ENCODE measurements at regions of chrX and their contacts with region 1.

Region 1: DNA sequence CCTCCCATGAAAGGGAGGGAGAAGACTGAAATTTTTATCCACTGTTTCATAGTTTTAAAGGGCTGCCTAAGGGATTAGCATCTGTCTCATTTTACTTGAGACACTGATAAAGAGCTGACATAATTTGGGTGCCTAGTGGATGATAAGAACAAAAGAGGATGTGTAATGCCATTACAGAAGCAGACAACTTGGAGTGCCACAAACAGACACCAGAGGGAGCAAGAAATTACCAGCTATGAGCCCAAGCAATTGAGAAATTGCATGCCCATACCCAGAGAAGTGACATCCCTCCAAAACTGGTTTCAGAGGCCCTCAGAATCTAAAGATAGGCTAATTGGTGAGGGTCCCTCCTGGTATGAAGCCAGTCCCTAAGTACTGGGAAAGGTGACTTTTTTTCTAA is 38.5 kb upstream of the POU3F4 start:
- DNase-seq: no peak
- ATAC-seq: no peak
- H3K4me3 ChIP-seq: no peak overlapping the region
- H3K27ac ChIP-seq: no peak overlapping the region
- H3K4me1 ChIP-seq: no peaks in the 10 kb centered on the region
- H3K27me3 ChIP-seq: no peaks in the 10 kb centered on the region
- CTCF ChIP-seq: peak in 7 of 12 donors; percentile 8 to 35 (median 20)
- POLR2A ChIP-seq: no peak

Region 2: GRCh38 chrX:82070941-82071340 is 1398.6 kb before region 1 on chrX:
- intact Hi-C with region 1: loop called in 1 of 10 experiments (anchors 10 kb)
- DNase-seq: no peak
- ATAC-seq: no peak
- H3K4me3 ChIP-seq: no peak overlapping the region
- H3K27ac ChIP-seq: no peak overlapping the region
- H3K4me1 ChIP-seq: no peaks in the 10 kb centered on the region
- H3K27me3 ChIP-seq: no peaks in the 10 kb centered on the region
- CTCF ChIP-seq: no peak
- POLR2A ChIP-seq: no peak

Region 3: DNA sequence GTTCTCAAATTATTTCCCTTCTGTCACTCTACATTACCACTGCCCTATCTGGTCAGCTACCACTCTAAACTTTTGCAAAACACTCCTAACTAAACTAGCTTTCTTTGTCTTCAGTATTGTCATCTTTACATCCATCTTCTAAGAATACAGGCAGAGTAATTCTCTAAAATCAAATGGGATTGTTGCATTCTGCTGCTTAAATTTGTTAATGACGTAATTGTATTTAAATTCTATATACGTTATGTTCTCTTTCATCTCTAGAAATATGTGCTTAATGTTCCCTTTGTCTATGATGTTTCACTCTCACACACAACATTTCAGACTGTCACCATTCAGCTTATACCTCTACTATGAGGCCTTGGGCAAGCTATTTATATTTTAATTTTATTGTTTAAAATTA is 1002.6 kb before region 1 on chrX:
- intact Hi-C with region 1: no loop called
- DNase-seq: no peak
- ATAC-seq: no peak
- H3K4me3 ChIP-seq: no peak overlapping the region
- H3K27ac ChIP-seq: no peak overlapping the region
- H3K4me1 ChIP-seq: no peaks in the 10 kb centered on the region
- H3K27me3 ChIP-seq: no peaks in the 10 kb centered on the region
- CTCF ChIP-seq: no peak
- POLR2A ChIP-seq: no peak

Region 4: GRCh38 chrX:83416273-83416672 is 53.3 kb before region 1 on chrX:
- intact Hi-C with region 1: no loop called
- DNase-seq: no peak
- ATAC-seq: no peak
- H3K4me3 ChIP-seq: no peak overlapping the region
- H3K27ac ChIP-seq: no peak overlapping the region
- H3K4me1 ChIP-seq: no peaks in the 10 kb centered on the region
- H3K27me3 ChIP-seq: no peaks in the 10 kb centered on the region
- CTCF ChIP-seq: peak in 2 of 12 donors; percentile 6 to 14
- POLR2A ChIP-seq: no peak

Region 5: DNA sequence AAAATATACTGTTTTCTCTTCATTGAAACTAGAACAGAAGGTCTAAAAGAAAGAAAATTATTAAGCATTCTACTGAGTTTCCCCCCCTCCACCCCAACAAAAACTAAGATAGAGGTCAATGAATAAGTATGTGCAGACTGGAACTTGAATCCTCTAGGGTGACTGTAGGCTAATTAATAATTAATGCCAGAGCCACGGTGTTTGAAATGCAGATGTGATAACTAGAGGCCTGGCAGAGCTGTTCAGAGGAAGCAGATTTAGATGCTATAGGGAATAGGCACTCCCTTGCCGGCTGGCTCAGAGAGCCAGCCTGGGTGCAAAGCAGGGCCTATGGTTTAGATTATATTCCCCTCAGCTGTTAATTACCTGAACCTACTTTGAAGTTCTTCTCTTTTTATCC is 26.3 kb after region 1 on chrX:
- intact Hi-C with region 1: no loop called
- DNase-seq: no peak
- ATAC-seq: no peak
- H3K4me3 ChIP-seq: no peak overlapping the region
- H3K27ac ChIP-seq: no peak overlapping the region
- H3K4me1 ChIP-seq: no peaks in the 10 kb centered on the region
- H3K27me3 ChIP-seq: peaks cover 0 to 7% (median 0%) of the 10 kb centered on the region in 9 donors
- CTCF ChIP-seq: no peak
- POLR2A ChIP-seq: no peak

Region 6: GRCh38 chrX:83535417-83536196 is 66.1 kb after region 1 on chrX:
- intact Hi-C with region 1: no loop called
- DNase-seq: no peak
- ATAC-seq: no peak
- H3K4me3 ChIP-seq: peak overlapping the region in 2 of 12 donors; percentile 3 to 17
- H3K27ac ChIP-seq: no peak overlapping the region
- H3K4me1 ChIP-seq: no peaks in the 10 kb centered on the region
- H3K27me3 ChIP-seq: peaks cover 0 to 4% (median 0%) of the 10 kb centered on the region in 9 donors
- CTCF ChIP-seq: no peak
- POLR2A ChIP-seq: no peak